Thyroid gland (tissue), 4 donors: ENCODE measurements at regions of chr4 and their contacts with region 1.

Region 1: DNA sequence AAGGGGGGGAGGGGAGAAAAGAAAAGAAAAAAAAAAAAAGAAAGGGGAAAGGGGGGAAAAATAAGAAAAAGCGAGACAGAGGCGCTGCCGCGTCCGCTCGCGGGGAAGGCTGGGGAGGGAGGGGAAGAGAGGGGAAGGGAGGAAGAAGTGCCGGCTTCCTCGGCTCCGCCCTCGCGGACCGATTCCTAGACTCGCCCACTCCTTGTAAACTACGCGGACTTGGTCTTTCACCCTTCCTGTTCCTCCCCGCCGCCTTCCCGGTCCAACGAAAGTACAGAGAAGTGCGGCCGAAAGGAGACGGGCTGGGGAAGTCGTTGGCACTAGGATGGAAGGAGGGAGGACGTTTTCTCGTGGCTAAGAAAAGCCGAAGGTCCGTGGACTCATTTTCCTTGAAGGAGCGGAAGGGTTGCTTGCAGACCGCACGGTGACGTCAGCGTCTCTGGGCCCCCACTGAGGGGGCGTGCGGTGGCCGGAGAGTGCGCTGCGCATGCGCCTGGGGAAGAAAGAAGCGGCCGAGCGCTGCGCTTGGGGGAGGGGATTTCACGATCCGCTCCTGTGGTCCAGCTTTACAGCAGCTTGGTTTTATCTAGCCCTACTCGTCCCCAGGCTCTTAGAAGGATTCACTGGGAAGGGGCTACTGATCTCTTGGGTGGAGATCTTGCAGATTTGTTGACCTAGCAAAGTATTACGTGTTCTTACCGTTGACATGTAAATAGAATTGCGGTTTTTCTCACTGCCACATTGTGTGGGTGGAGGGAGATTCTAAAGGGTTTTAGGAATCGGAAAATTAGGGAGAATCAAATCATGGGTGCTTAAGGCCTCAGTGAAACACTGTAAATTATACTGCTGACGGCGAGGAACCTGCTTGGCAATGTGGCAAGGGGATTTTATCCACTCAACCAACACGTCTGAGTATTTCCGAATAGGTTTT is at the start of gene CCNI:
- DNase-seq: peak; percentile 96 to 97
- H3K4me3 ChIP-seq: peak within 1 kb of the TSS; percentile 37 to 87 (median 81)
- H3K27ac ChIP-seq: peak within 1 kb of the TSS; percentile 98 to 100 (median 100)
- H3K4me1 ChIP-seq: peaks cover 18 to 24% of the 10 kb centered on the region in 2 donors
- H3K27me3 ChIP-seq: no peaks in the 10 kb centered on the region
- CTCF ChIP-seq: no peak
- POLR2A ChIP-seq: peak; percentile 53 to 91
- total RNA-seq, gene CCNI: 302 to 449 (median 371) TPM

Region 2: DNA sequence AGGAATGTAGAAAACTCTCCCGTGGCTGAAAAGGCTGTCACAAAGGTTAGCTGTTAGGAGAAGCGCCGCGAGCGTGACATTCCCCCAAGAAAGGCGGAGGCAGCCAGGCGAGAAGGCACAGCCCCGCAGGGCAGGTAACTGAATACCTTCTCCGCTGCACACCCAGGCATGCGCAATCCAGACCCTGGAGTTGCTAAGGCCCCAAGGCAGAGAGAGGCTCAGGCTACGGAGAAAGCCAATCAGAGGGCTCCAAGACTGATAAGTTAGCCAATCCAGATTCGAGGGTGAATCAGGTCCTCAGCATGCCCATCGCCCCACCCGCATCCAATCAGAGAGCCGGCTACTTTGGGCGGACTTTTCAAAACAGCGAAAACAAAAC is 80.4 kb after region 1 on chr4:
- intact Hi-C with region 1: loop called (anchors 5 kb)
- DNase-seq: peak; percentile 98
- H3K4me3 ChIP-seq: peak overlapping the region; percentile 79 to 95 (median 95)
- H3K27ac ChIP-seq: peak overlapping the region; percentile 83 to 97 (median 94)
- H3K4me1 ChIP-seq: peaks cover 10 to 18% of the 10 kb centered on the region in 2 donors
- H3K27me3 ChIP-seq: no peaks in the 10 kb centered on the region
- CTCF ChIP-seq: no peak
- POLR2A ChIP-seq: peak in 1 of 2 donors; percentile 93